ENCODE measurements at regions of chr4 and their contacts with region 1.

Region 1: GRCh38 chr4:139619644-139620043 is 46.0 kb upstream of the MGST2 start:
- DNase-seq: peak; percentile 26
- CTCF ChIP-seq: peak; percentile 43

Region 2: DNA sequence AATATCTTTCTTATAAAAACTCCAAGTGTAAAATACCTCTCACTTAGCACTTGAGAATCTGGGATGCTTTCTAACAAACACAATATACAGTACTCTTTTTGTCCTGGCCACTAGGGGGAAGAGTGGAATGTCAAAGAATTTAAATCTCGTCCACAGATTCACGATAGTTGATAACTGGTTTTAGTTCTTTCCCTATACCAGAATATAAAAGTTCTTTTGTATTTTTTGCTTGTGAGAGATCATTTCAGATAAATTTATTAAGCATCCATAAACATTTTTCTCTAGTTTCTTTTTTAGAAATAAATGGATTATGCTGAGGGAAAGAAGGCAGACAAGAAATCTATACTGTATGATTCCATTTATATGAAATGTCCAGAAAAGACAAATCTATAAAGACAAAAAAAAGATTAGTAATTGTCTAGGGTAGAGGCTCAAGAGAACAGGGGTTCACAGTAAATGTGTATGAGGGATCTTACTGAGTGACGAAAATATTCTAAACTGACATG is 390.1 kb before region 1 on chr4:
- CTCF ChIA-PET with region 1: no interaction called
- POLR2A ChIA-PET with region 1: no interaction called
- DNase-seq: peak; percentile 52
- CTCF ChIP-seq: peak; percentile 65

Region 3: DNA sequence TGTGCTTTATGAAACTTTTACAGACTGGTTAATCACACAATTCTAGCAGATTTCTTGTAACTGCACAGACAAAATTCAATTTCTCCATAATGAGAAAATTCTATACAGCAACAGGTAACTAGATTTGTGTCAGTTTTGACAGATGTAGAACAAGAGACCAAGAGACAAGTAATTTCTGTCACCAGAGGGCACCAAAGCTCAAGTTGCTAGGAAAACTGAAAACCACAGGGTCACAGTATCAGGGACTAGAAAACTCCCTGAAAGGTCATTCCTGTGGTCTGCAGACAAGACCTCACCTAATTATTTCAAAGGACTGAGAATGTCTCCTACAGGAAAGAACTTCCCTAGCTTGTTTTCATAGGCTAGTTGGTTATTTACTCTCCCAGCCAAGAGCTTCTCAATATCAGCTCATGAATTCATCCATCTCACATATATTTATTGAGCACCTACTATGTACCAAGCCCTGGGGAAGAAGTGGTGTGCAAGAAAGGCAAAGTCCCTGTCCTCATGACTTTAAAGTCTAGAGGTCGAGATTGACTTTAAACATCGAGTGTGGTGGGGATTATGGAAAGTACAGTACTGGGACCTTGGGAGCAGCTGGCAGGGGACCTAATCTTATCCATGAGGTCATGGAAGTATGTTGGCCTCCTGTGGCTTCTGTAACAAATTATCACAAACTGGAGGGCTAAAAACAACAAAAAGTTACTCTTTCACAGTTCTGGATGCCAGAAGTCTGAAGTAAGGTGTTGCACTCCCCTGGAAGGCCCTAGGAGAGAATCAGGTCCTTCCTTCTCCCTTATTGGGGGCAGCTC is 15.9 kb before region 1 on chr4:
- CTCF ChIA-PET with region 1: interaction called, 22 read pairs
- POLR2A ChIA-PET with region 1: no interaction called
- DNase-seq: peak; percentile 45
- CTCF ChIP-seq: peak; percentile 59

Region 4: GRCh38 chr4:139711461-139711860 is 91.8 kb after region 1 on chr4:
- CTCF ChIA-PET with region 1: no interaction called
- POLR2A ChIA-PET with region 1: no interaction called
- DNase-seq: no peak
- CTCF ChIP-seq: no peak

Measured in GM10248 (cell line).